Gastrocnemius medialis (tissue), 4 donors: ENCODE measurements at regions of chr12 and their contacts with region 1.

Region 1: DNA sequence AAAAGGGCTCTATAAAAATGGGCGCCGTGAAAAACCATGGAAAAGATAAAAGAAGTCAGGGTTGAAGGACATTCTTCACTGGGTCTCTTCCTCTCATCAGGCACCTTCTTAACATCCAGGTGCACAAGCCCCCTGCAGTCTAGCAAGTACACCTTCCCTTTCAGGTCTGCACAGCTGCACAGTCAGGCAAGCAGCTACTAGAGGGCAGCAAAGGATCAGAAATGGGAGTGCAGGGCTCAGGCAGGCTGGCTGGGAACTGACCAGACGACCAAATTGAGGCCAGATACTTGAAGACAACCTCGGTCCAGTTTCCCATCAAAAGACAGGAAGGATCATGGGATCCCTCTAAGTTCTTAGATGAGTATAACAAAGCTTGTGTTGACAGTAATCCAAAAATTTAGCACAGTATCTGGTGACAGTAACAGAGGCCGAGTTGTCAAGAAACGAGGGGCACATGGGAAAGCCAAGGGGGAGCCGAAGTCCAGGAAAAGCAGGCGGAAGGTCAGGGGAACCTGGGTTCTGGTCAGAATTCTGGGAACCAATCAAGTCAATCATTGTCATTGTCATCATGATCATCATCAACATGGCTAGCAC is 10.1 kb upstream of the GRIP1 start:
- DNase-seq: no peak
- ATAC-seq: no peak
- H3K4me3 ChIP-seq: no peak overlapping the region
- H3K27ac ChIP-seq: no peak overlapping the region
- H3K4me1 ChIP-seq: no peaks in the 10 kb centered on the region
- H3K27me3 ChIP-seq: no peaks in the 10 kb centered on the region
- CTCF ChIP-seq: peak in 3 of 5 experiments; percentile 20 to 24 (median 22)
- POLR2A ChIP-seq: no peak

Region 2: GRCh38 chr12:66860752-66861750 is 172.1 kb after region 1 on chr12:
- in situ Hi-C with region 1: no loop called
- intact Hi-C with region 1: loop called (anchors 5 kb)
- DNase-seq: peak in 1 of 2 donors; percentile 14
- ATAC-seq: peak in 1 of 2 donors; percentile 41
- H3K4me3 ChIP-seq: no peak overlapping the region
- H3K27ac ChIP-seq: no peak overlapping the region
- H3K4me1 ChIP-seq: no peaks in the 10 kb centered on the region
- H3K27me3 ChIP-seq: no peaks in the 10 kb centered on the region
- CTCF ChIP-seq: peak; percentile 44 to 81 (median 61)
- POLR2A ChIP-seq: no peak

Region 3: GRCh38 chr12:67122584-67122983 is 433.6 kb after region 1 on chr12:
- in situ Hi-C with region 1: no loop called
- intact Hi-C with region 1: no loop called
- DNase-seq: no peak
- ATAC-seq: no peak
- H3K4me3 ChIP-seq: no peak overlapping the region
- H3K27ac ChIP-seq: no peak overlapping the region
- H3K4me1 ChIP-seq: no peaks in the 10 kb centered on the region
- H3K27me3 ChIP-seq: no peaks in the 10 kb centered on the region
- CTCF ChIP-seq: no peak
- POLR2A ChIP-seq: no peak